AG04450 (cell line): ENCODE measurements at regions of chr3 and their contacts with region 1.

Region 1: DNA sequence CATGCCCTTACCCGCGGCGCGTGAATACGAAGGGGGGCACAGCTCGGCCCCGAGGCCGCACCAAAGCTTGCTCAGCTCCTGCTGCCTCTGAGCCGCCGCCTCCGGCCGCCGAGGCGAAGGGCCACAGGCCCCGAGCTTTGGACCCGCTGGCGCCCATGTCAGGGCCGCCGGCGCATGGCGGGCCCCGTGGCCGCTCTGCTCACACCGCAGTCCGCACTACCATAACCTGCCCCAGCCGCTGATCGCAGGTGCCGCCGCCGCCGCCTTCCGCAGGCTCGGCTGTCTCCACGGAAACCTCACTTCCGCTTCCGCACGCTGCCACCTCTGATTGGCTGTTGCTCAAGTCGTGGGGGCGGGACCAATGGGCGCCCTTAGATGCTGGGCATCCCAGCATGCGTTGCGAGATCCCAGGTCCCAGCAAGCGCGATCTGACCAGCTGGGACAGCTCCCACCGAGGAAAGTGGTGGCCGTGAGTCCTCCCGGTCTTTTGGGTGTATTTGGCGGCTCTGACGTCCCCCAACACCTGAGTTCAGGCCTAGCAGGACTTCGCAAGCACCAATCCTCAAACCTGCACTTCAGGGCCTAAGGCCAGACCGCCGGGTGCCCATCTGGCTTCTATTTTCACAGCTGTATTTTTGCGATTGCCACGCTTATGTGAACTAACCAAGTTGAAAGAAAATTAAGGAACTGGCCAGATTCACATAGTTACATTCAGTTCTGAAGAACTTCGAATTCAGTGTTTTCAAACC is at the start of gene TUSC2:
- DNase-seq: peak; percentile 82
- H3K4me3 ChIP-seq: peak within 1 kb of the TSS; percentile 87
- H3K27ac ChIP-seq: peak within 1 kb of the TSS; percentile 73
- H3K27me3 ChIP-seq: no peaks in the 10 kb centered on the region
- CTCF ChIP-seq: no peak
- polyA plus RNA-seq, gene TUSC2: 25.3 and 28.1 TPM in 2 replicates

Region 2: DNA sequence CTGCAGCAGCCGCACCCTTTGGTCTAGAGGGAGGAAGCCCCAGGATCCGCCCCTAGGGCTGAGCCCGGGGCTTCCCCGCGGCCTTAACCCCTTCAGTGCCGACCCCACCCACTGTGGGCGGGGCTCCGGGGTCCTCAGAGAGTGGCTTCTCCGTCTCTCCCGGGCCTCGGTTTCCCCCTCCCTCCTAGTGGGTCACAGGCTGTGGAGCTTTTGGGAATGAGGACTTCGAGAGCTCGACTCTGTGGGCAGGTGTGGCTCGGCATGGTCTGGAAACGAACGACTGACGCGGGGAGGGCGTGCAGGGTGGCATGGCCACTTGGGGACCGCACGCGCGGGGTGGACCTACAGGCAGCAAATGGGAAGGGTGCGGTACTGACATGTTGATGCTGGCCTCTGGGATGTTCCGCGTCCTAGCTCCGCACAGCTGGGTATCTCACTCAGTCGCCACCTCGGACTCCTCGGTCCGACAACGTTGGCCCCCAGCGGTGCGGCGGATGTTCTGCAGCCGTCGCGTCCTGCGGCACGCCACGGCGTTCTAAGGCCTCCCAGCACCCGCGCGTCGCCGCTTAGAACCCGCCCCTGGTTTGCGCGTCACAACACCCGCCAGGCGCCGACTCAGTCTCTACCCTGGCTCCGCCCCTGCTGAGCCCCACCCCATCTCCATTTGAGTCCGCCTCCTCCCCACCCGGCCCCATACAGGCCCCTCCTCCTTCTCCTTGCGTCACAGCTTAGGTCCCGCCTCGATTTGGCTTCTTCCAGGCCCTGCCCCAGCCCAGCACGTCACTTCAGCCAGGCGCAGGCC is 29.1 kb before region 1 on chr3 and contains the starts of genes HYAL3 and NAA80:
- CTCF ChIA-PET with region 1: interaction called, 10 read pairs
- POLR2A ChIA-PET with region 1: interaction called, 3 read pairs
- DNase-seq: peak; percentile 99
- H3K4me3 ChIP-seq: peak within 1 kb of the TSS; percentile 74
- H3K27ac ChIP-seq: peak within 1 kb of the TSS; percentile 62
- H3K27me3 ChIP-seq: no peaks in the 10 kb centered on the region
- CTCF ChIP-seq: peak; percentile 27
- polyA plus RNA-seq, gene HYAL3: 3.0 and 4.7 TPM in 2 replicates
- polyA plus RNA-seq, gene NAA80: 2.0 and 4.6 TPM in 2 replicates